Left cardiac atrium (tissue), 4 donors: ENCODE measurements at regions of chr14 and their contacts with region 1.

Region 1: DNA sequence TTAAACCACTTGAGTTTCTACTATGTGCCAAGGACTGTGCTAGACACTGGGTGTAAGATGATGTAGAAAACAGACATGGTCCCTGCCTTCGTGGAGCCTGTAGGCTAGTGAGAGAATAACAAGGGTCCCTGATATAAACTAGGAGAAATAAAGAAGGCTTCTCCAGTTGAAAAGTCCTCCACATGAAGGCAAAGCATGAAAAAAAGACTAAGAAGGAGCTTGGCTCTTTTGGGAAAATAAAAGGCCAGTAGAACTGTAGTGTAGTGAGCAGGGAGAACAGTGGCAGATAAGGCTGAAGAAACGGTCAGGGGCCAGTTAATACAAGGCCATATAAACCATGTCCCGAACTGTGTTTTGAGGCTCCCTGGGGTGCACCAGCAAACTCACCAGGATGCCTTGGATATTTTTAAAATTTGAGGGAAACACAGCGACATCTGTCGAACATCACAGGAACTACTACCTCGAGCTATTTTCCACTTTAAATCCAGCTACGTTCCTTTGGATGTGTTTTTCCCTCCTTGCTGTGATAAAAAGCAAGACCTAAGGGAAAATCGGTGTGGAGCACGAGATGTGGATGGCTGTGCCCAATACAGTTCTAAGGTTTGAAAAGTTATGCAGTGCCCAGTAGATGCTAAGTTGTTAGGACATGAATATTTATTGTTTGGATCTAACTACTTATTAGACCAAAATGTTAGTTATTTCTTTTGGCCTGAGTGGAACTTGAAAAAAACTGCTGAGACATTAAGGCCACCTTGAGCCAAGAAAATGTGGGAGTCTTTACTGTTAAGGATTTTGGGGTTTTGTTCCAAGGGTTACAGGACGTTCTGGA is 8.5 kb upstream of the CFL2 start:
- DNase-seq: no peak
- ATAC-seq: peak; percentile 66 to 72

Region 2: DNA sequence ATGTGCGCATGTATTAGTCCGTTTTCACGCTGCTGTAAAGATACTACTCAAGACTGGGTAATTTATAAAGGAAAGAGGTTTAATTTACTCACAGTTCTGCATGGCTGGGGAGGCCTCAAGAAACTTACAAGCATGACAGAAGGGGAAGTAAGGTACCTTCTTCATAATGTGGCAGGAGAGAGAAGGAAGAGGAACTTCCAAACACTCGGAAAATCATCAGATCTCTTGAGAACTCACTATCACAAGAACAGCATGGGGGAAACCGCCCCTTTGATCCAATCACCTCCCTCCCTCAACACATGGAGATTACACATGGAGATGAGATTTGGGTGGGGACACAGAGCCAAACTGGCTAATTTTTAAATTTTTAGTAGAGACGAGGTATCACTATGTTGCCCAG is 51.2 kb before region 1 on chr14:
- intact Hi-C with region 1: loop called (anchors 2 to 5 kb)
- DNase-seq: no peak
- ATAC-seq: no peak

Region 3: GRCh38 chr14:34678306-34678705 is 44.6 kb before region 1 on chr14:
- intact Hi-C with region 1: loop called (anchors 2 to 5 kb)
- DNase-seq: no peak
- ATAC-seq: no peak